Heart right ventricle (tissue), 16 donors: ENCODE measurements at regions of chr15 and their contacts with region 1.

Region 1: DNA sequence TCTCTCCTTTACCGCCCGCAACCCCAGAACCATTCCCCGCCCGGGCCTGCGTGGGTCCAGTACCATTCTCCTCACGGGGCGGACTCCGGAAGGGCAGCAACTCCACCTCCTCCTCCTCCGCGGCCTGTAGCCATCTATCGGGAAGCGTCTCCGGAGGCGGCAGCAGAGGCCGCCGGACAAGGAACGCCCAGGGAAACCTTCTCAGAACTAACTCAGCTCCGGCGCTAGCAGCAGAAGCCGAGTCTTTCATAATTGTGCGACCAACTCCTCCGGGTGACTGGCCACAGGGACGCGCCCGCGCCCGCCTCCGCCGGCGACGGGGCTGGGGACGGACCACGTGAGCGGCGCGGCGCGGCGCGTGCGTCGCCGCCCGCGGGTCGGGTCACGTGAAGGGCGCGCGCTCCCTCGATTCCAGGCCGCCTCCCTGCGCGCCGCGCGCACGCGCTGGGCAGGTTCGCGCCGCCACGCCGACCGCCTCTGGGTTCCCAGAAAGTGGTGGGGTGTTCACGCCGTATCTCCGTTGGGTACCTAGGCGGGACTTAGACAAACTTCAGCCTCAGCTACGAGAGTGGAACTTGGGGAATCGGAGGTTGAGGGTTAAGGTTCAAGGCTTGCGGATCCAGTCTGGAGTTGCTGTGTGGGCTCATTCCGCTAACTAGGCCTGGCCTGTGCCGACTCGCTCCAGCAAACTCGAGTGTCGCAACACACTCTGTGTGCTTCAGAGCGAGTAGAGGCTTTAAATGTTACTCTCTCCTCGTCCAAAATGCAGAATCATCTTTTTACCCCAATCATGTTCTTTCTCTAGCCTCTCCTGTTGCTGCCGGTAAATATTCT is at the start of gene TRPM7:
- DNase-seq: peak; percentile 89 to 91
- ATAC-seq: peak; percentile 93 to 98 (median 96)
- H3K4me3 ChIP-seq: peak within 1 kb of the TSS; percentile 45 to 96 (median 80)
- H3K27ac ChIP-seq: peak within 1 kb of the TSS; percentile 81 to 98 (median 97)
- H3K4me1 ChIP-seq: peaks cover 4 to 55% (median 39%) of the 10 kb centered on the region in 9 donors
- H3K27me3 ChIP-seq: no peaks in the 10 kb centered on the region
- CTCF ChIP-seq: peak in 2 of 9 donors; percentile 5 to 15
- total RNA-seq, gene TRPM7: 24.2 to 42.4 (median 28.5) TPM

Region 2: GRCh38 chr15:50758762-50759161 is 72.1 kb after region 1 on chr15:
- intact Hi-C with region 1: loop called in 2 of 10 experiments (anchors 10 kb)
- DNase-seq: no peak
- ATAC-seq: no peak
- H3K4me3 ChIP-seq: no peak overlapping the region
- H3K27ac ChIP-seq: no peak overlapping the region
- H3K4me1 ChIP-seq: peaks cover 0 to 50% (median 11%) of the 10 kb centered on the region in 9 donors
- H3K27me3 ChIP-seq: no peaks in the 10 kb centered on the region
- CTCF ChIP-seq: no peak

Region 3: DNA sequence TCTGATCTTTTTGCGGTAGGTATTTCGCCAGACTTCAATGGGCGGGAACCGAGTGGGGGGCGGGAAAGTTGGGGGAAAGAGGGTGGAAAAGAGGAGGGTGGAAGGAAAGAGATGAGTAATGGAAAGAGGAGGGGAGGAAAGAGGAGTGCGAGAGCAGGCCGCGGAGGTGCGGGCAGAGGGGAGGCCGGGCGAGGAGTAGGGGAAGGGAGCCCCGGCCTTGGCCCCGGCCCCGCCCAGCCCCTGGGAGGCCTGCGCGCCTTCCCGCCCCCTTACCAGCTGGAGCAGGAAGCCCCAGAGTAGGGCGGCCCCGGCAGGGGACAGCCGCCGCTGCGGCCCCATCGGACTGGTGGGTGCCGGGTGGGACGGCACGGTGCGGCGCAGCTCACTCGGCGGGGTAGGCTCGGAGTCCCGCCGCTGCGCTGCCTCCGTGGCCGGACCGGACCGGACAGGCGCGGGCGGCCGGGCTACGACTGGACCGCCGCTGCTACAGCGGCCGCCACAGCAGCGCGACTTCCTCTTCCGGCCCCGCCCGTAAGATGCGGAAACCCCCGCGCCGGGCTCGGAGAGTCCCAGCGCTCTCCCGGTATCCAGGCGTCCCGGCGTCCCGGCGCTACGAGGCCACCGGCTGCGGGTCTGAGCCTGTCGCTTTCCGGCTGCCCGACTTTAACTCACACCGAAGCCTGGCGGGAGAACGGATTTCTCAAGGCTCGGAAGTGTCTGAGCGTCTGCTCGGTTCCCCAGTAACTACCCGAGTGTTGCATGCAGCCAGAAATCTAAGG is 78.7 kb after region 1 on chr15 and contains the start of gene SPPL2A:
- intact Hi-C with region 1: loop called in 7 of 10 experiments (anchors 1 to 10 kb)
- DNase-seq: peak; percentile 87 to 88
- ATAC-seq: peak; percentile 85 to 94 (median 92)
- H3K4me3 ChIP-seq: peak within 1 kb of the TSS; percentile 56 to 92 (median 80)
- H3K27ac ChIP-seq: peak within 1 kb of the TSS; percentile 94 to 100 (median 98)
- H3K4me1 ChIP-seq: peaks cover 0 to 49% (median 19%) of the 10 kb centered on the region in 9 donors
- H3K27me3 ChIP-seq: no peaks in the 10 kb centered on the region
- CTCF ChIP-seq: peak in 1 of 9 donors; percentile 13
- total RNA-seq, gene SPPL2A: 68.1 to 152 (median 98.1) TPM

Region 4: GRCh38 chr15:50786871-50787270 is 100.2 kb after region 1 on chr15:
- intact Hi-C with region 1: loop called in 1 of 10 experiments (anchors 10 kb)
- DNase-seq: no peak
- ATAC-seq: no peak
- H3K4me3 ChIP-seq: no peak overlapping the region
- H3K27ac ChIP-seq: peak overlapping the region in 2 of 10 donors; percentile 1 to 52
- H3K4me1 ChIP-seq: peaks cover 0 to 13% (median 0%) of the 10 kb centered on the region in 9 donors
- H3K27me3 ChIP-seq: no peaks in the 10 kb centered on the region
- CTCF ChIP-seq: no peak

Region 5: GRCh38 chr15:50876989-50877360 is 190.3 kb after region 1 on chr15:
- intact Hi-C with region 1: loop called in 3 of 10 experiments (anchors 2 to 5 kb)
- DNase-seq: peak in 1 of 2 donors; percentile 84
- ATAC-seq: peak; percentile 44 to 84 (median 77)
- H3K4me3 ChIP-seq: peak overlapping the region in 9 of 10 donors; percentile 14 to 57 (median 45)
- H3K27ac ChIP-seq: peak overlapping the region in 3 of 10 donors; percentile 34 to 70 (median 35)
- H3K4me1 ChIP-seq: peaks cover 0 to 57% (median 0%) of the 10 kb centered on the region in 9 donors
- H3K27me3 ChIP-seq: no peaks in the 10 kb centered on the region
- CTCF ChIP-seq: peak; percentile 92 to 98 (median 95)

Region 6: GRCh38 chr15:50908210-50909009 is 221.7 kb after region 1 on chr15 and contains the start of gene AP4E1:
- intact Hi-C with region 1: loop called in 1 of 10 experiments (anchors 10 kb)
- DNase-seq: peak; percentile 92 to 93
- ATAC-seq: peak; percentile 88 to 96 (median 91)
- H3K4me3 ChIP-seq: peak within 1 kb of the TSS; percentile 75 to 98 (median 89)
- H3K27ac ChIP-seq: peak within 1 kb of the TSS; percentile 79 to 97 (median 92)
- H3K4me1 ChIP-seq: peaks cover 0 to 43% (median 35%) of the 10 kb centered on the region in 9 donors
- H3K27me3 ChIP-seq: no peaks in the 10 kb centered on the region
- CTCF ChIP-seq: peak; percentile 93 to 98 (median 97)
- total RNA-seq, gene AP4E1: 6.5 to 11.1 (median 8.9) TPM